ENCODE measurements at regions of chr7 and their contacts with region 1.

Region 1: DNA sequence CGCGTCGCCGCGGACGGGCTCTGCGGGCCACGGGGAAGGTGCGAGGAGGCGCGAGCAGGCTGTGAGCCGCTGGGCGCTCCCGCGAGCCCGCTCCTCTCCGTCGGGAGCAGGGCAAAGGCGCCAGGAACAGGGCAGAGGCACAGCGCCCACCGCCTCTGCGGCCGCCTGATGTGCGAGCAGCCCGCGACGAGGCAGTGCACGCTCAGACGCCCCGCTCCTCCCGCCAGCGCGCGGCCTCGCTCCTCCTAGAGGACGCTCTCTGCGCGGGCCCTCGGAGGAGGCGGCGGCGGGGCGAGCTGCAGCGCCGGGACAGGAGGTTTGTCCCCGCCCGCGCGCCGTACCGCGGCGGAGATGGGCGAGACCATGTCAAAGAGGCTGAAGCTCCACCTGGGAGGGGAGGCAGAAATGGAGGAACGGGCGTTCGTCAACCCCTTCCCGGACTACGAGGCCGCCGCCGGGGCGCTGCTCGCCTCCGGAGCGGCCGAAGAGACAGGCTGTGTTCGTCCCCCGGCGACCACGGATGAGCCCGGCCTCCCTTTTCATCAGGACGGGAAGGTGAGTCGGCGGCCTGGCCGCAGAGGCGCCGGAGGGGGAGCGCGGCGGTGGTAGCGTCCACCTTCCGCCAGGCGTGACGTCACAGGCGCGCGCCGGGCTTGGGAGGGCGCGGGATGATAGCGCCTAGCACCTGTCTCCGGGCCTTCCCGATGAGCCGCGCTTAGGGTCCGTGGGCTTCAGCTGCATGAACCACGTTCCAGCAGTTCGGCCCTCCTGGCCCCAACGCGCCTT is 731 bp downstream of the LANCL2 start:
- DNase-seq: peak; percentile 97
- H3K4me3 ChIP-seq: peak overlapping the region; percentile 62 to 94 (median 74)
- H3K27ac ChIP-seq: peak overlapping the region; percentile 93 to 99 (median 96)
- H3K4me1 ChIP-seq: peaks cover 0 to 22% (median 18%) of the 10 kb centered on the region in 4 donors
- H3K27me3 ChIP-seq: no peaks in the 10 kb centered on the region
- CTCF ChIP-seq: peak in 3 of 4 experiments; percentile 20 to 41 (median 21)
- EP300 ChIP-seq: peak in 2 of 4 donors; percentile 9 to 15
- POLR2A ChIP-seq: peak; percentile 8 to 50

Region 2: DNA sequence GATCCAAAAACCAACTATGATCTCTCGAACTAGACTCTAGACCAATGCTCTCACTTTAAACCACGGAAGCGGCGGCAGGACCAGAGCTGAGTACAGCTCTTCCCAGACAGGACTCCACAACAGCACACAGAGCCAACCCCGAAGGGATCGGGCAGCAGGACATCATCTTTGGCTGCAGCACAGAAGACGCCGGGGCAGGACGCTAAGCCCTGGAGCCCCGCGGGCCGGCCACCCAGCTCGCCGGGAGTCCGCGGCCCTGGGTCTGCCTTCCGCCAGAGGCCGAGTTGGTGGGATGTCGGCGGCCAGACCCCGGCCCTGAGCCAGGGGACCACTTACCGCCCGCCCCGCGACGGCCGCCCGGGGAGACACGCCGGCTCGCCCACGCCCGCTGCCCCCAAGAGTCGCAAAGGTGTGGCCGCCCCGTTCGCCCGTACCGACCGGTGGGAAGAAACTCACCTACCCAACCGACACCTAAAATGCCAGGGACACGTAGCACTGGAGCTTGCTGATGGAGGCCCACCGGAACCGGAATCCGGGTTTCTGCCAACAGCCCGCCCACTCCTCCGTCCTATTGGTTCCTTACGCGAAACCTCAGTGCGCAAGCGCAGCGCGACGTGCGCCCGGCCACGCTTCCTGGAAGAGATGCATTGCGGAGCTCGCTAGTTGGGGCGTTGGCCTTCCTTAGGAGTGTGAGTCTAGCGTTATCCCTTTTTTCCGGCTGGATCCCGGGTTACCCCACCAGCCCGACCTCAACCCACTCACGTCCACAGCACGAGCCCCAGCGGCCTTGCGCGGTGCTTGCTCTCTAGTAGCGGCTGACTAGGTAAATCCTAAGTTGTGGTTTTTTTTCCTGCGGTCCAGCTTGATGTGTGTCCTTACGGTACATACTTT is 606.9 kb before region 1 on chr7 and contains the start of gene SEC61G:
- intact Hi-C with region 1: loop called (anchors 5 kb)
- DNase-seq: peak; percentile 99
- H3K4me3 ChIP-seq: peak within 1 kb of the TSS; percentile 80 to 99 (median 94)
- H3K27ac ChIP-seq: peak within 1 kb of the TSS; percentile 87 to 94 (median 91)
- H3K4me1 ChIP-seq: peaks cover 0 to 32% (median 23%) of the 10 kb centered on the region in 4 donors
- H3K27me3 ChIP-seq: no peaks in the 10 kb centered on the region
- CTCF ChIP-seq: no peak
- EP300 ChIP-seq: no peak
- POLR2A ChIP-seq: peak; percentile 86 to 91
- total RNA-seq, gene SEC61G: 231 to 451 (median 354) TPM

Region 3: GRCh38 chr7:55280031-55280454 is 85.8 kb before region 1 on chr7:
- intact Hi-C with region 1: loop called (anchors 5 kb)
- DNase-seq: no peak
- H3K4me3 ChIP-seq: no peak overlapping the region
- H3K27ac ChIP-seq: no peak overlapping the region
- H3K4me1 ChIP-seq: no peaks in the 10 kb centered on the region
- H3K27me3 ChIP-seq: no peaks in the 10 kb centered on the region
- CTCF ChIP-seq: peak in 3 of 4 experiments; percentile 47 to 57 (median 52)
- EP300 ChIP-seq: no peak
- POLR2A ChIP-seq: no peak

Region 4: DNA sequence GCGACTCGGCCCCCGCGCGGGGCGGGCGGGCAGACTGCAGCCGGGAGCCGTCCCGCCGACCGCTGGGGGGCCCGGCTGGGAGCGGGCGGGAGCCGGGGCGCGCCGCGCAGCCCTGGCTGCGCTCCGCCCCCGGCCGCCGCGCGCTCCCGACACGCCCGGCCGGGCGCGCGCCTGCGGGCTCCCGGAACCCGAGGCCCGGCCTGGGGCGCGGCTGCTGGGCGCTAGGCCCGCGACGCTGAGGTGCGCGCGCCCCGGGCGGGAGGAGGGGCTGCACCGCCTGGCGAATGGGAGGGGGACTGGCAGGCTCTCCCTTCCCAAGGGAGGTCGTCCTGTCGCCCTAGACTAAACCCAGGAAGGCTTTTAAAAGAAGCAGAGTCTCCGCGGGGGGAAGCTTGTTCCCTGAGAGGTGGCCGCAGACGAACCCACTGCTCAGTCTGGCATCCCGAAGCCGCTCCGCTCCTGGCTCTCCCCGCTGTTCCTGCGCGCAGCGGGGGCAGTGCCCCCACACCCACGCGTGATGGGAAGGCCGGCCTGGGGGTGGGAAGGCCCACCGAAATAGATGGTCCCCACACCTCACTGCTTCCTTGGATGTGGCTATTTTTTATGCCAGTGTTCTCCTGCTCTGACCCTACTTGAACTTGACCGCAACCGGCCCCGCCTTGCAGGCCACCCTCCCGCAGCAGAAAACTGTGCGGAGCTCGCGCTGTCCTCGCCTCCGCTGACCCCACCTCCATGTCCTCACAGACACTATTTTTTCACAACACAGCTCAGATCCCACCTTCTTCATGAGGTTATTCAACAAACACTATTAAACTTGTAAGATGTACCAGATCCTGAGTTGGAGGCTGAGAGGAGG is 206.7 kb after region 1 on chr7 and contains the start of gene VOPP1:
- intact Hi-C with region 1: loop called (anchors 5 kb)
- DNase-seq: peak; percentile 73
- H3K4me3 ChIP-seq: peak within 1 kb of the TSS; percentile 97 to 99 (median 98)
- H3K27ac ChIP-seq: peak within 1 kb of the TSS; percentile 87 to 96 (median 92)
- H3K4me1 ChIP-seq: peaks cover 0 to 45% (median 25%) of the 10 kb centered on the region in 4 donors
- H3K27me3 ChIP-seq: no peaks in the 10 kb centered on the region
- CTCF ChIP-seq: no peak
- EP300 ChIP-seq: no peak
- POLR2A ChIP-seq: peak in 1 of 2 donors; percentile 20
- total RNA-seq, gene VOPP1: 22.2 to 26.4 (median 24.3) TPM

Region 5: DNA sequence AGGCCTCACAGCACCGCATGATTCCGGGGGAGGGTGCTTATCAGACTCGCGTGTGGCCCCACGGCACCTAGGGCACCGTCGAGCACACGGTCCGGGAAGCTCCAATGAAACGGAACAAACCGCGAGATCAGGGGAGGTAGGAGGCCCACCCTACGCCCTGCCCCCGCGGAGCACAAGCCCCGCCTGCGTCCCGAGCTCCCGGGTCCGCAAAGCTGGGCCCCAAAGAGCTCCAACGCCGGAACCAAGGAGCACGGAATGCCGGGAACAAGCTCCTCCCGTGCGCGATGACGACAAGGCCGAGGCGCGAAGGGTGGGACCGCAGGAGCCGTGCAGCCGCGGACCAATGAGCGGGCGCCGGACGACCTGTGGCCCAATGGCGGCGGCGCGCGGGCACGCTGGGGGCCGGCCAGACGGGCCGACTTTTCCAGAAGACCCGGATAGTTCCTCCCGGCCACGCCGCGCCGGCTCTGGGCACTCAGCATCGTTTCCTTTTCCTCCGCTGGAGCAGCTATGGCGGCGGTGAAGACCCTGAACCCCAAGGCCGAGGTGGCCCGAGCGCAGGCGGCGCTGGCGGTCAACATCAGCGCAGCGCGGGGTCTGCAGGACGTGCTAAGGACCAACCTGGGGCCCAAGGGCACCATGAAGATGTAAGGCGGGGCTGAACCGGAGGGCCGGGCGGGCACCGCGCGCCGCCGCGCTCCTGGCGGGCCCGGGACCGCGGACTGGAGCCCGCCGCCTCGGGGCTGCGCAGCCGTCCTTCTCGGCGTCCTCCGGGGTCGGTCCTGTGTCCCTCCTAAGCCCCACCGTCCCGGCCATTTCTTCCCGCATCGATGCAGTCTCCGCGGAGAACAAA is 685.7 kb after region 1 on chr7 and contains the starts of genes CCT6A and PSPH:
- intact Hi-C with region 1: loop called (anchors 10 kb)
- DNase-seq: peak; percentile 99
- H3K4me3 ChIP-seq: peak within 1 kb of the TSS; percentile 60 to 92 (median 81)
- H3K27ac ChIP-seq: peak within 1 kb of the TSS; percentile 82 to 97 (median 90)
- H3K4me1 ChIP-seq: peaks cover 0 to 64% (median 51%) of the 10 kb centered on the region in 4 donors
- H3K27me3 ChIP-seq: no peaks in the 10 kb centered on the region
- CTCF ChIP-seq: no peak
- EP300 ChIP-seq: peak in 1 of 4 donors; percentile 53
- POLR2A ChIP-seq: peak in 1 of 2 donors; percentile 77
- total RNA-seq, gene CCT6A: 67.0 to 93.1 (median 88.5) TPM
- total RNA-seq, gene PSPH: 7.2 to 18.8 (median 9.9) TPM

Measured in sigmoid colon (tissue), 7 donors.